Activated T-helper 2 cell treated with anti-CD3 and anti-CD28 coated beads, Interferon-gamma antibody, Interleukin-2, Interleukin-4, amounts not matched to agents 10 μg/mL and 5 μg/mL and 100 μg/mL, durations not matched to agents 14 hours and 24 hours and 36 hours (primary cell): ENCODE measurements at regions of chr5 and their contacts with region 1.

Region 1: DNA sequence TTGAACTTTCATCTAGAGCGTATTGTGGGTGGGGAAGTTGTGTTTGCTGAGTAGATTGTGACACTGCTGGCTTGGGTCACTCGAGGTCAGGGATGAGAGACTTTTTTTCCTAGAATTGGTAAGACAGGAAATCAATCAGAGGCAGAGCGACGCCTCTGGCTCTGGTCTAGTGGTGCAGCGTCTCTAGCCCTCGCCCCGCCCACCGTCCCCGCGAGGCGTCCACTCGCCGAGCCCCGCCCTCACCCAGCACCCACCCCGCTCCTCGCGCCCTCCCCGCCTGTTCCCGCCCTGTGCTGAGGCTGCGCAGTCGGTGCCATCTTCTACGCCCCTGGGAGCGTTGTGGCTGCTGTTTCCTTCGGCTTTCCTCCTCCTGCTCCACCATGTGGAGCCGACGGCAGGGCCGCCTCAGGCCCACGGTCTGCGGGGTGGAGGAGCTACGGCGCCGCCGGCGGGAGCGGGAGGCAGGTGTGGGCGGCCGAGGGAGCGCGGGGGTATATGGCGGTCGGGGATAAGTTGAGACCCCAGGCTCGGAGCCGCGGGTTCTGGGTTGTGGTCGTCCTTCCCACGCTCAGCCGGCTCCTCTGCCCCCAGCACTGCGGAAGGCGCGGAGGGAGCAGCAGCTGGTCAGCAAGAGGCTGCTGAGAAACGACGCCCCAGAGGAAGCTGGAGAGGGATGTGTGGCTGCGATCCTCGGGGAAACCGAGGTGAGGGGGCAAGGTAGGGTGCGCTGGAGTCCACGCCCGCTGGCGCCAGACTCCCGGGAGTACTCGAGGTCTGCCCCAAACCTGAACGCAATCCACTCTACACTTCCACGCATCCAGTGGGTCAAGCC is at the start of gene TMCO6:
- DNase-seq: peak; percentile 93
- H3K4me3 Mint-ChIP-seq: peak within 1 kb of the TSS; percentile 94
- H3K27ac Mint-ChIP-seq: peak within 1 kb of the TSS; percentile 93
- H3K4me1 Mint-ChIP-seq: peaks cover 26% of the 10 kb centered on the region
- H3K27me3 Mint-ChIP-seq: no peaks in the 10 kb centered on the region
- total RNA-seq, gene TMCO6: 40.2 and 40.7 TPM in 2 replicates

Region 2: DNA sequence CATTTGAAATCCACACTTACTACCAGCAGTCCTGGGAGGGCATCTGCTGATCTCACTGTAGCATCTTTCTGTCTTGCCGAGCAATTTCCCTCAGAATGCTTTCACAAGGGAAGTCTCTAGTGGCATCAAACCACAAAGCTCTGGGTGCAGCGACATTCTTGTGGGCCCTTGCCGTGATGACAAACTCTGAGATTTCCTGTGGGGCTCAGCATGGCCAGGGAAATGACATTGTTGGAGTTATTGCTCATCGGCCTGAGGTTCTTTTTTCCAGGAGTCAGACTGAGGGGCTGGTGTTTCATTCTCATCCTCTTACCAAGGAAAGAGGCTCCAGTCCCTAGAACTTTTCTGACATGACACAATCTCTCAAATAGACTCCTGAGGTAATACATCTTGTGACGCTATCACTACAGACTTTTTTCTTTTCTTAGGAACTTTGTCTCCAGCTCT is 387.8 kb before region 1 on chr5:
- intact Hi-C with region 1: loop called (anchors 10 kb)
- DNase-seq: peak; percentile 59
- H3K4me3 Mint-ChIP-seq: no peak overlapping the region
- H3K27ac Mint-ChIP-seq: peak overlapping the region; percentile 80
- H3K4me1 Mint-ChIP-seq: peaks cover 34% of the 10 kb centered on the region
- H3K27me3 Mint-ChIP-seq: no peaks in the 10 kb centered on the region

Region 3: GRCh38 chr5:140372971-140373487 is 266.3 kb before region 1 on chr5:
- intact Hi-C with region 1: loop called (anchors 1 kb)
- DNase-seq: no peak
- H3K4me3 Mint-ChIP-seq: no peak overlapping the region
- H3K27ac Mint-ChIP-seq: no peak overlapping the region
- H3K4me1 Mint-ChIP-seq: peaks cover 5% of the 10 kb centered on the region
- H3K27me3 Mint-ChIP-seq: no peaks in the 10 kb centered on the region

Region 4: DNA sequence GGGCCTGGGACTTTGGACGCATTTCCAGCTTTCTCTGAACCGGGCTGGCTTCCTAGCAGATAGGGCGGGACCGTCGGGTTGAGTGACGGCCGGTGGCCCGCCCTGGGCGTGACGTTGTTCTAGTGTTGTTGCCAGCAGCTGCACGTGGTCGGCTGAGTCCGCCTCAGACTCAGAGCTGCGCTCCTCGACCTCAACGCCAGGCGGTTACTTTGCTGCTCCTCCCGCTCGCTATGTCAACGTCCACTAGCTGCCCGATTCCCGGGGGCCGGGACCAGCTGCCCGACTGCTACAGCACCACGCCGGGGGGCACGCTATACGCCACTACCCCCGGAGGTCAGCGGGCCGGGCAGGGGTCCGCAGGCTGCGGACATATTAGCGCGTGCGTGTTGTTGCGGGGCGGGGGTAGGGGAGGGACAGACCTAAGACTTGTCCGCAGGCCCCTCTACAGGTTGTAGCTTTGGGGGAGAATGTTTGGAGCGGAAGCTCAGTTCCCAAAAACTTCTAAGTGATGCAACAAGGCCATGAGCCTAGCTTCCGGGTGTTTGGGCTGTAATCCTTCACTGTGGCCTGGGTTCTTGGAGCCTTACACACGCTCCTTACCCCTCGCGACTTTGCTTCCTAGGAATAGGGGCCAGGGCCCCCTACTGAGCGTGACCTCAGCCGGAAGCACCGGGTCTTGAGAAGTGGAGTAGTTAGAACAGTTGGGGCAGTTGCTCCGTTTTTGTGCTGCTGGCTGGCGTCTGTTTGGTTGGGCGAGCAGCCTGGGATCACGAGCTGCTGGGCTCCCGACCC is 91.7 kb before region 1 on chr5 and contains the start of gene EIF4EBP3:
- intact Hi-C with region 1: loop called (anchors 1 kb)
- DNase-seq: peak; percentile 82
- H3K4me3 Mint-ChIP-seq: peak within 1 kb of the TSS; percentile 76
- H3K27ac Mint-ChIP-seq: peak within 1 kb of the TSS; percentile 84
- H3K4me1 Mint-ChIP-seq: peaks cover 16% of the 10 kb centered on the region
- H3K27me3 Mint-ChIP-seq: no peaks in the 10 kb centered on the region
- total RNA-seq, gene EIF4EBP3: 9.2 and 15.0 TPM in 2 replicates

Region 5: GRCh38 chr5:140564196-140565023 is 75.0 kb before region 1 on chr5 and contains the starts of genes APBB3 and SLC35A4:
- intact Hi-C with region 1: loop called (anchors 1 kb)
- DNase-seq: peak; percentile 97
- H3K4me3 Mint-ChIP-seq: peak within 1 kb of the TSS; percentile 96
- H3K27ac Mint-ChIP-seq: peak within 1 kb of the TSS; percentile 95
- H3K4me1 Mint-ChIP-seq: peaks cover 33% of the 10 kb centered on the region
- H3K27me3 Mint-ChIP-seq: no peaks in the 10 kb centered on the region
- total RNA-seq, gene APBB3: 15.1 and 17.9 TPM in 2 replicates
- total RNA-seq, gene SLC35A4: 91.9 and 97.3 TPM in 2 replicates

Region 6: DNA sequence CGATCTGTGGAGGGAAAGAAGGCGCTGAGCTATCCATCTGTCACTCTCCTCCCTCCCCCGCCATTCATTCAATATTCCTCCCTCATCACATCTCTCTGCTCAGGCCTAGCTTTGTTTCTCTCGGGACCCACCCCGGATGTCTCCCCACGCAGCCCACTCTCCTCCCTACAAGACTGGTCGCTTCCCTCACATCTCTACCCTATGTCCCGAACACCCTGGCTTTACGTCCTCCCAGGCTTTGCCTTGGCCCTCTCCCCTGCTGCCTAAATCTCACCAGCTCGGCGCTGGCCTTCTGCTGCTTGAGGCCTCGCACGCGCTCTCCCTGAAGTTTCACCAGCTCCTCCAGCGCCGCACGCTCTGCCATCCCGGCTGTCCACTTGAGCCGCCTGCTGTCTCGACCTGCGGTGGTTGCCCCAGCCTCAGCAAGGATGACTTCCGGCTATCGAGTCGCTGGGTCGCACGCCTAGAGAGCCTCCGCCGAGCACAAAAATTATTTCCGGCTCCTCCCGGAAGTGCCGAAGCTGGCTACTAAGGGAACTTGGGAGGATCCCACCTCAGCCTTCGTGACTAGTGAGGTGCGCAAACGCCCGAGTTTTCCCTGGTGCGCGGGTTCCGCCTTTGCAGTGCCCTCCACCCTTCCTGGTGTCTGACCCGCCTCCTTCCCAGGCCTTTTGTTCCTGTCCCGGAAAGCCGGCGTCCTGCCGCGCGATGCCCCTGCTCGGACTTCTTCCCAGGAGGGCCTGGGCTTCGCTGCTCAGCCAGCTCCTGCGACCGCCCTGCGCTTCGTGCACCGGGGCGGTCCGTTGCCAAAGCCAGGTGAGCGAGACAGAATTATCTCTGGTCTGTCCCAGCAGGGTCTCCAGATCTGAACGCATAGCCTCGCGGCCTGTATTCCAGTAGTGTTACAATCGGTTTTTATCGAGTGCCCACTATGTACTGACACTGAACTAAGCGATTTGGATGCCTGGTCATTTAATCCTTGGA is 51.9 kb after region 1 on chr5 and contains the starts of genes HARS1 and HARS2:
- intact Hi-C with region 1: loop called (anchors 2 kb)
- DNase-seq: peak; percentile 79
- H3K4me3 Mint-ChIP-seq: peak within 1 kb of the TSS; percentile 97
- H3K27ac Mint-ChIP-seq: peak within 1 kb of the TSS; percentile 91
- H3K4me1 Mint-ChIP-seq: peaks cover 20% of the 10 kb centered on the region
- H3K27me3 Mint-ChIP-seq: no peaks in the 10 kb centered on the region
- total RNA-seq, gene HARS1: 107 and 110 TPM in 2 replicates
- total RNA-seq, gene HARS2: 28.0 and 30.1 TPM in 2 replicates